ENCODE measurements at regions of chr11 and their contacts with region 1.

Region 1: DNA sequence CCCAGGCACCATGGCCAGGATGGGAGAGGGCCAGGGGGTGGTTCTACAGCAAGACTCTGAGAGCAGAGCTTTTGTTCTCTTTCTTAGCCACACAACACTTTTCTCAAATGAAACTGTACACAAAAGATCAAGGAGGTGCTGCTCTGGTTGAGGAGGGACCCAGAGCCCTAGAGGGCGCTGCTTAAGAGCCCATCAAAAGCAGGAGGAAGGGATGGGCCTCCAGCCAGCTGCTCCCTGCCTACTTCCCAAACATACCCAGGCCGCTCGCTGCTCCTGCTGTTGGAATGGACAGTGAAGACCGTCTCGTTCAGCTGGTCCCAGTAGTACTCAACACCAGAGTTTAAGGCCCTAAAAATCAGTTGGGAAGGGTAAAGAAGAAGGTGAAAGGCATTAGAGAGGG is 18.4 kb upstream of the CHRM4 start:
- DNase-seq: peak; percentile 68
- ATAC-seq: peak; percentile 95
- H3K4me3 Mint-ChIP-seq: no peak overlapping the region
- H3K27ac Mint-ChIP-seq: no peak overlapping the region
- H3K4me1 Mint-ChIP-seq: no peaks in the 10 kb centered on the region
- H3K27me3 Mint-ChIP-seq: no peaks in the 10 kb centered on the region
- CTCF ChIP-seq: no peak

Region 2: GRCh38 chr11:46100670-46101069 is 309.4 kb before region 1 on chr11:
- CTCF ChIA-PET with region 1: no interaction called
- POLR2A ChIA-PET with region 1: no interaction called
- DNase-seq: no peak
- ATAC-seq: no peak
- H3K4me3 Mint-ChIP-seq: no peak overlapping the region
- H3K27ac Mint-ChIP-seq: peak overlapping the region; percentile 41; the same call in 1 of the 2 replicates
- H3K4me1 Mint-ChIP-seq: peaks cover 39% of the 10 kb centered on the region
- H3K27me3 Mint-ChIP-seq: no peaks in the 10 kb centered on the region
- CTCF ChIP-seq: no peak

Region 3: GRCh38 chr11:46373787-46374740 is 36.0 kb before region 1 on chr11:
- CTCF ChIA-PET with region 1: no interaction called
- POLR2A ChIA-PET with region 1: no interaction called
- DNase-seq: no peak
- ATAC-seq: no peak
- H3K4me3 Mint-ChIP-seq: no peak overlapping the region
- H3K27ac Mint-ChIP-seq: no peak overlapping the region
- H3K4me1 Mint-ChIP-seq: peaks cover 14% of the 10 kb centered on the region
- H3K27me3 Mint-ChIP-seq: no peaks in the 10 kb centered on the region
- CTCF ChIP-seq: no peak

Region 4: GRCh38 chr11:46513934-46514342 is 103.9 kb after region 1 on chr11:
- CTCF ChIA-PET with region 1: interaction called, 6 read pairs
- POLR2A ChIA-PET with region 1: interaction called, 11 read pairs
- DNase-seq: no peak
- ATAC-seq: peak; percentile 77
- H3K4me3 Mint-ChIP-seq: no peak overlapping the region
- H3K27ac Mint-ChIP-seq: peak overlapping the region; percentile 88
- H3K4me1 Mint-ChIP-seq: peaks cover 31% of the 10 kb centered on the region
- H3K27me3 Mint-ChIP-seq: no peaks in the 10 kb centered on the region
- CTCF ChIP-seq: no peak